Esophagus muscularis mucosa (tissue), 4 donors: ENCODE measurements at regions of chr2 and their contacts with region 1.

Region 1: DNA sequence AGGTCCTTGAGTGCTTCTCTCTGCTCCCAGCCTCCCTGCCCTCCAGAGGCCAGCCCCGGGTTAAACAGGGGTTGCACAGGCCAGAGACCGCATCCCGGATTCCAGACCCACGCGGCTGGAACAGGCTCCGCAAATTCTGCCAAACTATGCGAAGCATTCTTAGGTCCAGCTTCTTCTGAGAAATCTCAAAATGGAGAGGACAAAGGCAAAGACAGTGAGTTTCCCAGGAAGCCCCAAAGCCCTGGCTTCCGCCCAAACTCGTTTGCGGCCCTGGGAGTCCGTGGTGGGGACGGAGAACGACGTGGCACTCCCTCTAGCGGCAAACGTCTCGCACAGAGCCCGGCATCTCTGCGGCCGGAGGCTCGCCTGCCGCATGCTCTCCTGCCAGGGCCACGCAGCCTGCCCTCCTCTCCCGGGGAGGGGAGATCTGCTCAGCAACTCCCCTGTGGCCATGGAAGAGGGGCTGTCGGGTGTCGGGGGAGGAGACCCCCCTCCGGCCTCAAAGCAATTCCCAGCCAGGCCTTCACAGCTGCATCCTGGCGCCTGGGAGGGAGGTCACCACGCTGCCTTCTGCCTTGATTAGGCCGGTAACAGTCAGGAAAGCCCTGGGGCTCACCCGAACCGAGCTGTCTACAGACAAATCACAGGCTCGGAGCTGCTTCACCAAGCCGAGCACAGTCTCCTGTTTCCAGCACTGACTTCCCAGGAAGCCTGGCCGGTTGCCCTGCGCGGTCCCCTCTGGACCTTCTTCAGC is 33.4 kb upstream of the KLHL29 start:
- DNase-seq: no peak
- H3K4me3 ChIP-seq: peak overlapping the region in 3 of 4 donors; percentile 12 to 40 (median 25)
- H3K27ac ChIP-seq: peak overlapping the region; percentile 26 to 60 (median 41)
- H3K4me1 ChIP-seq: peaks cover 3 to 19% (median 16%) of the 10 kb centered on the region in 4 donors
- H3K27me3 ChIP-seq: no peaks in the 10 kb centered on the region
- CTCF ChIP-seq: peak; percentile 71 to 94 (median 84)
- EP300 ChIP-seq: no peak
- POLR2A ChIP-seq: no peak

Region 2: GRCh38 chr2:22209545-22209944 is 1142.0 kb before region 1 on chr2:
- intact Hi-C with region 1: no loop called
- DNase-seq: no peak
- H3K4me3 ChIP-seq: no peak overlapping the region
- H3K27ac ChIP-seq: no peak overlapping the region
- H3K4me1 ChIP-seq: no peaks in the 10 kb centered on the region
- H3K27me3 ChIP-seq: no peaks in the 10 kb centered on the region
- CTCF ChIP-seq: no peak
- EP300 ChIP-seq: no peak
- POLR2A ChIP-seq: no peak

Region 3: GRCh38 chr2:22904126-22904684 is 447.4 kb before region 1 on chr2:
- intact Hi-C with region 1: loop called (anchors 10 kb)
- DNase-seq: peak; percentile 64
- H3K4me3 ChIP-seq: no peak overlapping the region
- H3K27ac ChIP-seq: no peak overlapping the region
- H3K4me1 ChIP-seq: no peaks in the 10 kb centered on the region
- H3K27me3 ChIP-seq: no peaks in the 10 kb centered on the region
- CTCF ChIP-seq: peak; percentile 30 to 52 (median 36)
- EP300 ChIP-seq: no peak
- POLR2A ChIP-seq: no peak

Region 4: GRCh38 chr2:23021311-23022120 is 330.0 kb before region 1 on chr2:
- intact Hi-C with region 1: loop called (anchors 5 kb)
- DNase-seq: no peak
- H3K4me3 ChIP-seq: no peak overlapping the region
- H3K27ac ChIP-seq: no peak overlapping the region
- H3K4me1 ChIP-seq: no peaks in the 10 kb centered on the region
- H3K27me3 ChIP-seq: no peaks in the 10 kb centered on the region
- CTCF ChIP-seq: no peak
- EP300 ChIP-seq: no peak
- POLR2A ChIP-seq: no peak

Region 5: GRCh38 chr2:23624378-23624777 is 272.8 kb after region 1 on chr2:
- intact Hi-C with region 1: no loop called
- DNase-seq: no peak
- H3K4me3 ChIP-seq: no peak overlapping the region
- H3K27ac ChIP-seq: peak overlapping the region; percentile 17 to 95 (median 69)
- H3K4me1 ChIP-seq: peaks cover 15 to 72% (median 51%) of the 10 kb centered on the region in 4 donors
- H3K27me3 ChIP-seq: no peaks in the 10 kb centered on the region
- CTCF ChIP-seq: peak in 2 of 3 experiments; percentile 9 to 48
- EP300 ChIP-seq: no peak
- POLR2A ChIP-seq: no peak